CD8-positive, alpha-beta T cell (primary cell): ENCODE measurements at regions of chr9 and their contacts with region 1.

Region 1: GRCh38 chr9:36166101-36166927 is 2.9 kb upstream of the CCIN start:
- DNase-seq: peak; percentile 64 to 92 (median 81)
- ATAC-seq: peak; percentile 98
- H3K4me3 ChIP-seq: peak overlapping the region; percentile 34 to 53
- H3K4me3 Mint-ChIP-seq: peak overlapping the region; percentile 70
- H3K27ac ChIP-seq: no peak overlapping the region
- H3K27ac Mint-ChIP-seq: no peak overlapping the region
- H3K4me1 ChIP-seq: peaks cover 7% of the 10 kb centered on the region
- H3K4me1 Mint-ChIP-seq: peaks cover 10% of the 10 kb centered on the region
- H3K27me3 ChIP-seq: no peaks in the 10 kb centered on the region
- H3K27me3 Mint-ChIP-seq: no peaks in the 10 kb centered on the region
- CTCF ChIP-seq: peak; percentile 83

Region 2: GRCh38 chr9:35954942-35955546 is 211.3 kb before region 1 on chr9:
- CTCF ChIA-PET with region 1: interaction called, 7 read pairs
- POLR2A ChIA-PET with region 1: no interaction called
- intact Hi-C with region 1: loop called in 1 of 2 experiments (anchors 10 kb)
- DNase-seq: peak in 8 of 9 experiments; percentile 12 to 80 (median 46)
- ATAC-seq: peak; percentile 67
- H3K4me3 ChIP-seq: no peak overlapping the region
- H3K4me3 Mint-ChIP-seq: no peak overlapping the region
- H3K27ac ChIP-seq: no peak overlapping the region
- H3K27ac Mint-ChIP-seq: no peak overlapping the region
- H3K4me1 ChIP-seq: no peaks in the 10 kb centered on the region
- H3K4me1 Mint-ChIP-seq: peaks cover 2% of the 10 kb centered on the region
- H3K27me3 ChIP-seq: peaks cover 0 to 3% of the 10 kb centered on the region in 2 experiments
- H3K27me3 Mint-ChIP-seq: peaks cover 12% of the 10 kb centered on the region
- CTCF ChIP-seq: peak; percentile 86

Region 3: GRCh38 chr9:36118706-36119105 is 47.6 kb before region 1 on chr9:
- CTCF ChIA-PET with region 1: interaction called, 576 read pairs
- POLR2A ChIA-PET with region 1: interaction called, 4 read pairs
- intact Hi-C with region 1: no loop called
- DNase-seq: no peak
- ATAC-seq: no peak
- H3K4me3 ChIP-seq: no peak overlapping the region
- H3K4me3 Mint-ChIP-seq: no peak overlapping the region
- H3K27ac ChIP-seq: no peak overlapping the region
- H3K27ac Mint-ChIP-seq: no peak overlapping the region
- H3K4me1 ChIP-seq: no peaks in the 10 kb centered on the region
- H3K4me1 Mint-ChIP-seq: no peaks in the 10 kb centered on the region
- H3K27me3 ChIP-seq: no peaks in the 10 kb centered on the region
- H3K27me3 Mint-ChIP-seq: no peaks in the 10 kb centered on the region
- CTCF ChIP-seq: no peak

Region 4: DNA sequence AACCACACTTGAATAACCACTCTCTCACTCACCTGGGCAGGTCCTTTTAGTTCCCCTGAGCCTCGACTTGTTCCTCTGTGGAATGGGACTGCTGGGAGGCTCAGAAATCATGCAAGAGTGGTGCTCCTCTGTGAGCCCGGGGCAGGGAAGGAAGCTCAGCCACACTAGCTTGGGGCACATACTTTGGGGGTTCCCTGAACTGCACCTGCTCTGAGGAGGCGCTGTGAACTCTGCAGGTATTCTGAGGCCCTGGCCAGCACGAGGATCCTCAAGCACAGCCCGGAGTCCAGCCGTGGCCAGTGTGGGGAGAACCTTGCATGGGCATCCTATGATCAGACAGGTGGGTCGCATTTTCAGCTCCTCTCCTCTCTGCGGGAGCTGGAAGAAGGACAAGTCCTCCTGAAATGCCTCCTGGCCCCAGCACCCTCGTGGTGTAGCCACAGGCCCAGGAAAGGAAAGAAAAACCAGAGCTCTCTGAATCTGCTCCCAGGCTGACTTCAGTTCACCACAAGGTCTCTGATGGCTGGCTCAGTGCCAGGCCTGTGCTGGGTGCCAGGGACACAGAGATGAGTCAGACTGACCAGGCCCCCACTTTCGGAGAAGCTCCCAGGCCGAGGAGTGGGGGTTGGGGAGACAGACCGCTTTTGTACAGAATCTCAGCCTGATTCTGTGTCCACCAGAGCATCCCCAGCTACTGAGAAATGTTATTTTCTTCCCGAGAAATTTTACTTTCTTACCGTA is 17.8 kb before region 1 on chr9:
- CTCF ChIA-PET with region 1: interaction called, 39 read pairs
- POLR2A ChIA-PET with region 1: interaction called, 7 read pairs
- intact Hi-C with region 1: loop called in 1 of 2 experiments (anchors 1 kb)
- DNase-seq: peak; percentile 44 to 89 (median 79)
- ATAC-seq: peak; percentile 6
- H3K4me3 ChIP-seq: no peak overlapping the region
- H3K4me3 Mint-ChIP-seq: peak overlapping the region; percentile 8
- H3K27ac ChIP-seq: peak overlapping the region in 1 of 2 experiments; percentile 28
- H3K27ac Mint-ChIP-seq: peak overlapping the region; percentile 71
- H3K4me1 ChIP-seq: peaks cover 90% of the 10 kb centered on the region
- H3K4me1 Mint-ChIP-seq: peaks cover 87% of the 10 kb centered on the region
- H3K27me3 ChIP-seq: no peaks in the 10 kb centered on the region
- H3K27me3 Mint-ChIP-seq: no peaks in the 10 kb centered on the region
- CTCF ChIP-seq: no peak

Region 5: GRCh38 chr9:36177571-36177970 is 11.3 kb after region 1 on chr9:
- CTCF ChIA-PET with region 1: interaction called, 10 read pairs
- POLR2A ChIA-PET with region 1: no interaction called
- intact Hi-C with region 1: no loop called
- DNase-seq: no peak
- ATAC-seq: no peak
- H3K4me3 ChIP-seq: no peak overlapping the region
- H3K4me3 Mint-ChIP-seq: no peak overlapping the region
- H3K27ac ChIP-seq: no peak overlapping the region
- H3K27ac Mint-ChIP-seq: no peak overlapping the region
- H3K4me1 ChIP-seq: no peaks in the 10 kb centered on the region
- H3K4me1 Mint-ChIP-seq: peaks cover 2% of the 10 kb centered on the region
- H3K27me3 ChIP-seq: no peaks in the 10 kb centered on the region
- H3K27me3 Mint-ChIP-seq: peaks cover 5% of the 10 kb centered on the region
- CTCF ChIP-seq: no peak

Region 6: DNA sequence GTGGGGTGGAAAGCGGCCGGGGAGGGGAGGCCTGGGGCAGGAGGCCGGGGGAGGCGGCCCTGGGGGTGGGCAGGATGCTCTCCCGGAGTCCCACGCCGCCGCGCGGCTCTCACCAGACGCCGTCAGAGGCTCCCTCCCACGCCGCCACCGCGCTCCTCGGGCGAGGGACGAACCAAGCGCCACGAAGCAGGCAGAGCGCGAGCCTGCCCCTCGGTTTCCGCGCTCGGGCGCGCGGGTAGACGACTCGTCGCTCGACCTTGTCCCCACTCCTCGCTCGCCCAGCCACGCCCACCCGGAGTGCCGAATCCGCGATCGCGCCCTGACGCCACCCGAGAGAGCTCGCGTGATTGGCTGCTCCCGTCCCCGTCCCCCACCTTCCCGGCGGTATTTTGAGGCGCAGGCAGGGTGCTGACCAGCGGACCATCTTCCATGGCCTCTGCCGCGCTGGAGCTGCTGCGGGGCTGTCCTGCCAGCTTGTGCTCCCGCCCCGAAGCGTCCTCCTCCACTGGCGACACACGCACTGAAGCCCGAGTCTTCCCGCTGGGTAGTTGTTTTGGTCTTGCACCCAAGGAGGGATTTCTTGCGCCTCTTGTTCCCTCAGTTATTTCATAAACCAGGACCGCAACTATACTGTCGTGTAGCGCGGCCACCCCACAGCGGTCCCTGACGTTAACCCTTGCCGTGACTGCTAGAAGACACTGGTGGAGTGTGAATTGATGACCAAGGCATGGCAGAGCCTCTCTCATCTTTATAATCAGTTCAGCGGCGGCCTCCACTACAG is 92.1 kb after region 1 on chr9 and contains the start of gene GNE:
- CTCF ChIA-PET with region 1: no interaction called
- POLR2A ChIA-PET with region 1: no interaction called
- intact Hi-C with region 1: no loop called
- DNase-seq: peak; percentile 95 to 99 (median 98)
- ATAC-seq: peak; percentile 89
- H3K4me3 ChIP-seq: peak within 1 kb of the TSS; percentile 85 to 100
- H3K4me3 Mint-ChIP-seq: peak within 1 kb of the TSS; percentile 98
- H3K27ac ChIP-seq: peak within 1 kb of the TSS; percentile 90 to 91
- H3K27ac Mint-ChIP-seq: peak within 1 kb of the TSS; percentile 97
- H3K4me1 ChIP-seq: peaks cover 17% of the 10 kb centered on the region
- H3K4me1 Mint-ChIP-seq: peaks cover 16% of the 10 kb centered on the region
- H3K27me3 ChIP-seq: no peaks in the 10 kb centered on the region
- H3K27me3 Mint-ChIP-seq: no peaks in the 10 kb centered on the region
- CTCF ChIP-seq: no peak
- total RNA-seq, gene GNE: 17.3 to 17.4 TPM